IMR-90 (cell line): ENCODE measurements at regions of chr13 and their contacts with region 1.

Region 1: DNA sequence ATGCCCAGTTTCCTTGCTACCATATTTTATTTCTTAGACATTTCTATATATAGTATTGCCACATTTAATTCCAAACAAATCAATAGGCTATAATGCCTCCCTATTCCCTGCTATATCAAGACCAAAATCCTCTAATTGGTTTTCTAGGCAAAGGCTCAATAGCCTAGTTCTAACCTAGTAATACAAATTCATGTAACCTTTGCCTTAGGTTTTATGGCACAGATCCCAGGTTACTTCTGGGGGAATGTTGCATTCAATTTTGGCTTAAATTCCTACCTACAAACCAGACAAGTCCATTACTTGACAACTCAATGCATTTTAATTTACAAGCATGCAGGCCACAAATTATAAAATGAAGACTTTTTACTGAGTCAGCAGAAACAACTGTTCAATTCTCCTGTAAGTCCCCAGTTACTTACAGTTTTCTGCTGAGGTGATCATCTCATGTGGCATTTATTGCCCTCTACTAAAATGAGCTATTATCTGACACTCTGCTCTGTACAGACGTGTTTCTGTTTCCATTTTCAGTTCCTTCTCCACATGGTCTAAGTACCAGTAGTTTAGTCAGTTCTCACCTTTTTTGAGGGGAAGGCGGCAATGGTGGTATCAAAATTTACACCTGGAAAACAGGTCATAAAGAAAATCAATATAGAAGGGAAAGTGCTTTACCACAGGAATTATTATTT is 11.7 kb downstream of the KCNRG start:
- DNase-seq: no peak
- ATAC-seq: no peak
- H3K4me3 ChIP-seq: no peak overlapping the region
- H3K27ac ChIP-seq: no peak overlapping the region
- H3K4me1 ChIP-seq: peaks cover 2% of the 10 kb centered on the region; the same call in 1 of the 2 replicates
- H3K27me3 ChIP-seq: no peaks in the 10 kb centered on the region
- CTCF ChIP-seq: no peak
- POLR2A ChIP-seq: no peak
- RAD21 ChIP-seq: no peak

Region 2: DNA sequence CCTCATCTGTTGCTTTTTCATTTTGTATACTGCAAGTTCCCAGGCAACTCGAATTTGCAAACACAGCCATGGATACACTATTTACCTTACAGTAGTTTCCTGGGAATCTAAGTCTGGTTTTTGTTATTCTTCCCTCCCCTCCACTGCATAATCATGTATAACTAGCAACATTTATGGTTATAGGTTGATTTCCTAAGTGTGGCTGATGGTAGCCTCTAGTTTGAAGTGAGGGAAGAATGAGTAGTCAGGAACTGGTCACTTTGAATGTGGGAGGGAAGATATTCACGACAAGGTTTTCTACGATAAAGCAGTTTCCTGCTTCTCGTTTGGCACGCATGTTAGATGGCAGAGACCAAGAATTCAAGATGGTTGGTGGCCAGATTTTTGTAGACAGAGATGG is 11.7 kb before region 1 on chr13 and contains the start of gene KCNRG:
- CTCF ChIA-PET with region 1: interaction called, 10 read pairs
- POLR2A ChIA-PET with region 1: no interaction called
- dilution Hi-C with region 1: no loop called
- in situ Hi-C with region 1: no loop called
- intact Hi-C with region 1: no loop called
- DNase-seq: peak; percentile 39
- ATAC-seq: no peak
- H3K4me3 ChIP-seq: no peak within 1 kb of the TSS
- H3K27ac ChIP-seq: no peak within 1 kb of the TSS
- H3K4me1 ChIP-seq: peaks cover 8% of the 10 kb centered on the region
- H3K27me3 ChIP-seq: no peaks in the 10 kb centered on the region
- CTCF ChIP-seq: no peak
- POLR2A ChIP-seq: no peak
- RAD21 ChIP-seq: no peak
- total RNA-seq, gene KCNRG: 2.7 and 5.0 TPM in 2 replicates

Region 3: DNA sequence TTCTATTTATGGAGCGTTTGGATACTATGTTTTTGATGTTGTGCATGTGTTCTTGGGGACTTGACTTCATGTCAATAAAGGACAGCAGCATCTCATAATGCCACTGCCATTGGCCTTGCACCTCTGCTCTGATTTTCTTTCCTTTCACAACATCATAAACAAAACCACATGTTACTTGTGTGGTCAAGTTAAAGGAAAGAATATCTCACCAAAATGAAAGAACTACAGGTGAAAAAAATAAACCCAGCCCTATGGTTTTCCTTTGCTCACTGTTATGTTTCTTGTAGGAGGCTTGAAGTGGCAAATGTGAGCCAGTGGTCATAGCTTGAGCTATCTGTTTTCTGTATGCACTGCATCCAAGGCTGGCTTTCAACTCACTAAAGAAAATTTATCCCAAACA is 228.7 kb after region 1 on chr13:
- CTCF ChIA-PET with region 1: no interaction called
- POLR2A ChIA-PET with region 1: no interaction called
- dilution Hi-C with region 1: no loop called
- in situ Hi-C with region 1: no loop called
- intact Hi-C with region 1: no loop called
- DNase-seq: no peak
- ATAC-seq: no peak
- H3K4me3 ChIP-seq: no peak overlapping the region
- H3K27ac ChIP-seq: no peak overlapping the region
- H3K4me1 ChIP-seq: no peaks in the 10 kb centered on the region
- H3K27me3 ChIP-seq: peaks cover 34% of the 10 kb centered on the region
- CTCF ChIP-seq: no peak
- POLR2A ChIP-seq: no peak
- RAD21 ChIP-seq: no peak